ENCODE measurements at regions of chr12 and their contacts with region 1.

Region 1: DNA sequence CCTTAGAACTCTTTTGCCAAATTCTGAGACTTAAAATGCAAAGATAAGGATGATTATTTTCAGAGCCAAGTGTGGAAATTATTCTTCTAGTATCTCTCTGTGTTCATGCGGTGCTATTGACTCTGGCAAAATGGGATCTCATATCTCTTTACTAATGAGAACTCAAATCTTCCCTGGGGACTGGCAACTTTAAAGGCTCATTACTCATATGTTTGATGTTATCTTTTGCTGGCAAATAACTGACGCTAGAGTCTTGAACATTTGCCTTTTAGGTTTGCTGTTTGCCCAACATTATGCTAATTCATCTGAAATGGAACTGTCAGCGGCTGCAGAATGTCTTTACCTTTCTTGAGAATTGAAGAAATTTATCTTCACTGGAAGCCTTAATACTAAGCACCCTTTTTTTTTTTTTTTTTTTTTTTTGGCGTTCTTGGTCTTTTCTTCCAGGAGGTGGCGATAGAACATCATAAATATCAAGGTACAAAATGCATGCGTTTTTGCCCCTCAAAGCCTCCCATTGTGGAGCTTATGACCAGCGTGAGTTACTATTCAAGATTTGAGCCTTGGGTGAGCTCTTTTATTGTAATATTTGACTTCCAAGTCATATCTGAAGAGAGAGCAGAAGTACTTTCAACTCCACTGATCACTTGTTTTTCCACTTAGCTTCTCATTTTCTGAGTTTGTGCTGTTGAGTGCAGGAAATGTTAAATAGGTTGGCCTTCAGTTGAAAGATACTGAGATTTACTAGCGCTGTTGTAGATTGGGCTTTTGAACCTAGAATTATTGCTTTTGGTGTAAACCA is 86.6 kb downstream of the CAND1 start:
- DNase-seq: peak; percentile 73
- H3K4me3 ChIP-seq: no peak overlapping the region
- H3K27ac ChIP-seq: no peak overlapping the region
- H3K4me1 ChIP-seq: no peaks in the 10 kb centered on the region
- CTCF ChIP-seq: peak; percentile 88

Region 2: DNA sequence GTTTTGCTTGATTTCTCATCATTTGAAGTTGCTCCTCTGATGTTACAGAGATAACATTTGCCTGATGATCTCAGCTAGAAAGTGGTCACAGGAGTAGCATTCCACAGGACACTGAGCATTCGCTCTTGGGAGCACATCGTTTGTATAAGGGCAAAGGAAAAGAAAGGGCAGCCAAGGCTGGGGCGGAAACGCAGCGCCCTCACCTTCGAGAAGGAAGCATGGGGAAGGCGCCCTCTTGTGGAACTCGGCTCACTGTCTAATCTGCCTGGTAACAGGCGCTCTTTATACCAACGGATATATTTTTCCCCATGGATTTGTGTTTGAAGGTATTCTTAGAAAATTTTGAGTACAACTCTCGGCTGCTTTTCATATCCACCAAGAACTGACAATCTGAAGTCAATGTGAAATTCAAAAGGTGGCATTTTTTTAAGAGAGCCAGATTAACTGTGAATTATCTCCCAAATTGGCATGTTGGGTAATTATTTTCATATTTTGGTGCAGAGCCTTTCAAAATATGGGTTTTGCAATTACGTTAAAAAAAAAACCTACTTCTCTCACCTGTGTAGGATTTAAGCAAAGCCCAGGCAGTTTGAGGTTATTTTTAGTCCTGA is 86.1 kb after region 1 on chr12:
- CTCF ChIA-PET with region 1: no interaction called
- POLR2A ChIA-PET with region 1: interaction called, 4 read pairs
- intact Hi-C with region 1: loop called (anchors 5 kb)
- DNase-seq: peak; percentile 85
- H3K4me3 ChIP-seq: no peak overlapping the region
- H3K27ac ChIP-seq: no peak overlapping the region
- H3K4me1 ChIP-seq: peaks cover 5% of the 10 kb centered on the region
- CTCF ChIP-seq: peak; percentile 93

Region 3: GRCh38 chr12:67943226-67943892 is 587.6 kb after region 1 on chr12:
- CTCF ChIA-PET with region 1: interaction called, 3 read pairs
- POLR2A ChIA-PET with region 1: no interaction called
- intact Hi-C with region 1: loop called (anchors 2 kb)
- DNase-seq: peak; percentile 83
- H3K4me3 ChIP-seq: no peak overlapping the region
- H3K27ac ChIP-seq: no peak overlapping the region
- H3K4me1 ChIP-seq: peaks cover 5% of the 10 kb centered on the region
- CTCF ChIP-seq: peak; percentile 95

Region 4: GRCh38 chr12:68031881-68032739 is 676.3 kb after region 1 on chr12:
- CTCF ChIA-PET with region 1: no interaction called
- POLR2A ChIA-PET with region 1: no interaction called
- intact Hi-C with region 1: loop called (anchors 10 kb)
- DNase-seq: no peak
- H3K4me3 ChIP-seq: no peak overlapping the region
- H3K27ac ChIP-seq: no peak overlapping the region
- H3K4me1 ChIP-seq: no peaks in the 10 kb centered on the region
- CTCF ChIP-seq: no peak

Region 5: GRCh38 chr12:68223083-68223747 is 867.4 kb after region 1 on chr12:
- CTCF ChIA-PET with region 1: no interaction called
- POLR2A ChIA-PET with region 1: no interaction called
- intact Hi-C with region 1: loop called (anchors 10 kb)
- DNase-seq: peak; percentile 78
- H3K4me3 ChIP-seq: no peak overlapping the region
- H3K27ac ChIP-seq: no peak overlapping the region
- H3K4me1 ChIP-seq: peaks cover 3% of the 10 kb centered on the region
- CTCF ChIP-seq: peak; percentile 96

Region 6: GRCh38 chr12:68317047-68317667 is 961.4 kb after region 1 on chr12:
- CTCF ChIA-PET with region 1: no interaction called
- POLR2A ChIA-PET with region 1: interaction called, 5 read pairs
- intact Hi-C with region 1: loop called (anchors 5 kb)
- DNase-seq: peak; percentile 72
- H3K4me3 ChIP-seq: no peak overlapping the region
- H3K27ac ChIP-seq: no peak overlapping the region
- H3K4me1 ChIP-seq: no peaks in the 10 kb centered on the region
- CTCF ChIP-seq: peak; percentile 95